Dendritic cell treated with granulocyte-macrophage colony-stimulating factor and Interleukin-4, amounts not matched to agents 40 ng/mL and 50 ng/mL, for 4 days (primary cell): ENCODE measurements at regions of chr10 and their contacts with region 1.

Region 1: GRCh38 chr10:97736902-97737769 is at the start of gene ZFYVE27:
- H3K4me3 Mint-ChIP-seq: peak within 1 kb of the TSS; percentile 94
- H3K27ac Mint-ChIP-seq: peak within 1 kb of the TSS; percentile 91
- H3K4me1 Mint-ChIP-seq: peaks cover 49% of the 10 kb centered on the region
- H3K27me3 Mint-ChIP-seq: no peaks in the 10 kb centered on the region

Region 2: DNA sequence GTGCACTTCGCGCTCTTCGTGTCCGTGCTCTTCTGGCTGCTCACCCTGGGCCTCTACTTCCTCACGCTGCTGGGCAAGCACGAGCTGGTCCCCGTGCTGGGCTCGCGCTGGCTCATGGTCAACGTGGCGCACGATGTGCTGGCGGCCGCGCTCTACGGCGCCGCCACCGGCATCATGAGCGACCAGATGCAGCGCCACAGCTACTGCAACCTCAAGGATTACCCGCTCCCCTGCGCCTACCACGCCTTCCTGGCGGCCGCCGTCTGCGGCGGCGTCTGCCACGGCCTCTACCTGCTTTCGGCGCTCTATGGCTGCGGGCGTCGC is 23.1 kb before region 1 on chr10:
- intact Hi-C with region 1: loop called (anchors 1 kb)
- H3K4me3 Mint-ChIP-seq: peak overlapping the region; percentile 98
- H3K27ac Mint-ChIP-seq: peak overlapping the region; percentile 97
- H3K4me1 Mint-ChIP-seq: peaks cover 73% of the 10 kb centered on the region
- H3K27me3 Mint-ChIP-seq: peaks cover 4% of the 10 kb centered on the region

Region 3: GRCh38 chr10:98150544-98150943 is 413.4 kb after region 1 on chr10:
- intact Hi-C with region 1: no loop called
- H3K4me3 Mint-ChIP-seq: no peak overlapping the region
- H3K27ac Mint-ChIP-seq: no peak overlapping the region
- H3K4me1 Mint-ChIP-seq: peaks cover 42% of the 10 kb centered on the region
- H3K27me3 Mint-ChIP-seq: no peaks in the 10 kb centered on the region